PC-9 (cell line): ENCODE measurements at regions of chr16 and their contacts with region 1.

Region 1: GRCh38 chr16:58487566-58488351 is 12.2 kb upstream of the NDRG4 start:
- DNase-seq: peak; percentile 58 to 77
- H3K4me3 ChIP-seq: no peak overlapping the region
- H3K27ac ChIP-seq: no peak overlapping the region
- H3K4me1 ChIP-seq: no peaks in the 10 kb centered on the region
- H3K27me3 ChIP-seq: no peaks in the 10 kb centered on the region
- CTCF ChIP-seq: peak; percentile 92

Region 2: DNA sequence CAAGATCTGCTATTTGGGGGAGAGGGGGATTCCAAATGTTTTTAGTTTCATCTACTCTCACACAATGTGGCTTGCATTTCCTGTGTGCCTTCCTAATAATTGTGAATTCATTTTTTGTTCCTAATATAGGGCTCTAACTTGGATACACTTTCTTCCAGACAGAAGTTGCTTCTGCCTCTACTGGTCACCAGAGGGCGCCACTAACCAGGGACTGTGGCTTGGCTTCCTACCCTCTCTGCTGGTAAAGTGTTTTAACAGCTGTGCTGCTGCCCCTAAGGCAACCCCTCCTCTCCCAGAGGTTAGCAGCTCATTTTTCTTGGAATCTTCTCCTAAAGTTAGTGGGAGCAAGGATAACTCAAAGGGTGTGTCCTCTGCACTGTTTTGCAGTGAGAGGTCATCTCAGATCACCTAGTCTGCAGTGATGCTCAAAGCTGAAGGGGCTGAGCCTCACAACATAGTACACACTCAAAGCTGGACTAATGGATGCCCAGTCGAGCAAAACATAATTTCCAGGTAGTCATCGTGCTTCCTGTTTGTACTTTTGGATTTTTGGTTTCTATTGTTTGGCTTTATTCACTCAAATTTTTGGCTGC is 187.9 kb before region 1 on chr16:
- CTCF ChIA-PET with region 1: interaction called, 5 read pairs
- POLR2A ChIA-PET with region 1: no interaction called
- intact Hi-C with region 1: loop called (anchors 2 kb)
- DNase-seq: peak; percentile 36 to 41
- H3K4me3 ChIP-seq: no peak overlapping the region
- H3K27ac ChIP-seq: no peak overlapping the region
- H3K4me1 ChIP-seq: no peaks in the 10 kb centered on the region
- H3K27me3 ChIP-seq: no peaks in the 10 kb centered on the region
- CTCF ChIP-seq: peak; percentile 91

Region 3: DNA sequence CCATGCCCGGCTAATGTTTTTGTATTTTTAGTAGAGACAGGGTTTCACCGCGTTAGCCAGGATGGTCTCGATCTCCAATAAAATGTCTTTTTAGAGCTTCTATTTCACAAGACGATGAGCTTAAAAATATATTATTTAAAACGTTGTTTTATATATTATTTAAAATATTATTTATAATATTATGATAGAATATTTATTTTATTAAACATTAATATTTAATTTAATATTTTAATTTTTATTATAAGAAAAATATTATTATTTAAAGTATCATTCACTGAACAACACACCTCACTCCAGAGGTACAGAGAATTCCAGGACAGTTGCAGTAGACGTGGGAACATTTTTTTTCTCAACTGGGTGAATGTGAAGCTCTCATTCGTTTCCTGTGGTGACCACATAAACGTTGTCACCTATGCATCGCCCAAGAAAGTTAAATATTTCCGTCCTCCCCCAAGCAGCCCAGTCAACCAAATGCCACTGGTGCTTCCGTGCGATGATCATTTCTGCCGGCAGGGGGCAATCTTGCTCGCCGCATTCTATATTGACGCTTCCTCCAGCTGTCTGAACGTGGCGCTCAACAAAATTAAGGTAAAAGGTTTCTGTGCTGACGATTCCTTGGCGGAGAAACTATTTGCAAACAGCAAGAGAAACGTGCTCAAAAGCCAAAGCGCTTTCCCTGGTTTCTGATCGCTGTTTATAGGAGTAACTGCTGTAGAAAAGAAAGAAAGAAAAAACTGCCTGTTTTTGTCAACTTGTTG is 151.2 kb before region 1 on chr16:
- CTCF ChIA-PET with region 1: interaction called, 23 read pairs
- POLR2A ChIA-PET with region 1: interaction called, 3 read pairs
- intact Hi-C with region 1: loop called (anchors 1 kb)
- DNase-seq: peak; percentile 77 to 88
- H3K4me3 ChIP-seq: peak overlapping the region; percentile 23; the same call in 1 of the 2 replicates
- H3K27ac ChIP-seq: no peak overlapping the region
- H3K4me1 ChIP-seq: peaks cover 24% of the 10 kb centered on the region
- H3K27me3 ChIP-seq: no peaks in the 10 kb centered on the region
- CTCF ChIP-seq: peak; percentile 93

Region 4: DNA sequence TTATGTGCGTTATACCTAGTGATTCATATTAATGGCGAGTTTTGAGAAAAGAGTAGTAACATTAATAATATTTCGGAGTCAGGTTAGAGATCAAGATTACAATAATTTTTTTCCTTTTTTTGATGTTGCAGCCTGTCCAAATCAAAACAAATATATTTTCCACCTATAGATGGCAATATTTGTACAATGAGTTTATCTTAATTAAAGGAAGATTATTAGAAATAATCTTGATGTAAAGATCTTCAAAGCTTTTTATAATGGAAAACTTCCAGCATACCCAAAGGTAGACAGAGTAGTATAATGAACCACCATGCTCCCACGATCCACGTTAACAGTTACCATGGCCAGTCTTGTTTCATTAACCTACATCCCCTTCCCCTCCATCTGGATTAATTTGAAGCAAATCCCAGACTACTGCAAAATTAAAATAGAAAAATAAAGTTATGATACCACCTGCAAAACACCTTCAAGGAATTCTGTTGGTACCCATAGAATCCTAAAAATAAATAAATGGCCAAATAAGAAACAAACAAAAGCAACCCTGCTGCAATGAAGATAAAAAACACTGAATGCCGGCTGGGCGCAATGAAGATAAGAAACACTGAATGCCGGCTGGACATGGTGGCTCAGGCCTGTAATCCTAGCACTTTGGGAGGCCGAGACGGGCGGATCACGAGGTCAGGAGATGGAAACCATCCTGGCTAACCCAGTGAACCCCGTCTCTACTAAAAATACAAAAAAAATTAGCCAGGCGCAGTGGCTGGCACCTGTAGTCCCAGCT is 142.0 kb before region 1 on chr16:
- CTCF ChIA-PET with region 1: no interaction called
- POLR2A ChIA-PET with region 1: no interaction called
- intact Hi-C with region 1: loop called (anchors 2 kb)
- DNase-seq: no peak
- H3K4me3 ChIP-seq: no peak overlapping the region
- H3K27ac ChIP-seq: no peak overlapping the region
- H3K4me1 ChIP-seq: 0 out of 2 replicates have a peak, but pooled peaks cover 4% of the 10 kb centered on the region
- H3K27me3 ChIP-seq: no peaks in the 10 kb centered on the region
- CTCF ChIP-seq: peak; percentile 69